Mammary epithelial cell (primary cell): ENCODE measurements at regions of chr18 and their contacts with region 1.

Region 1: DNA sequence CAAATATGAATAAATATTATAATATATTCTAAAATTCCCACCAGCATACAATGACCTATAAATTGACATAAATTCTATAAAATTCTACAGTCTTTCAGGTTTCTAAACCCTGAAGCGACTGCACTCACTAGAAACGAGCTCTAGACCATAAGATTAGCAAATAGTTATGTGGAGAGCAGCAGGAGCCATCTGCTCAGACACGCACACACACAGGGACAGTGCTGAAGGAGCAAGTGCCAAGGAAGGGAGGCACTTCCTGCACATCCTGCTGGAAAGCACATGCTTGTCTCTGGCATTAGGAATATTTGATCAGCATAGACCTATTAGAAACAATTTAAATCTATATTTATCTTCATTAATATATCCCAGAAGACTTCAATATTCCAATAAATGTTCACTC is 713.9 kb upstream of the CDH2 start:
- DNase-seq: no peak
- H3K4me3 ChIP-seq: no peak overlapping the region
- H3K27ac ChIP-seq: no peak overlapping the region
- H3K4me1 ChIP-seq: no peaks in the 10 kb centered on the region
- H3K27me3 ChIP-seq: no peaks in the 10 kb centered on the region
- CTCF ChIP-seq: no peak

Region 2: GRCh38 chr18:30288662-30289414 is 1398.0 kb after region 1 on chr18:
- CTCF ChIA-PET with region 1: no interaction called
- dilution Hi-C with region 1: no loop called
- in situ Hi-C with region 1: no loop called
- intact Hi-C with region 1: loop called (anchors 5 kb)
- DNase-seq: no peak
- H3K4me3 ChIP-seq: no peak overlapping the region
- H3K27ac ChIP-seq: no peak overlapping the region
- H3K4me1 ChIP-seq: no peaks in the 10 kb centered on the region
- H3K27me3 ChIP-seq: no peaks in the 10 kb centered on the region
- CTCF ChIP-seq: no peak